ENCODE measurements at regions of chr16 and their contacts with region 1.

Region 1: GRCh38 chr16:4271176-4272066 is 1.4 kb downstream of the TFAP4 start:
- DNase-seq: peak; percentile 95
- H3K4me3 Mint-ChIP-seq: peak overlapping the region; percentile 86
- H3K27ac Mint-ChIP-seq: peak overlapping the region; percentile 94
- H3K4me1 Mint-ChIP-seq: peaks cover 12% of the 10 kb centered on the region
- H3K27me3 Mint-ChIP-seq: no peaks in the 10 kb centered on the region

Region 2: GRCh38 chr16:4307215-4308037 is 36.0 kb after region 1 on chr16:
- CTCF ChIA-PET with region 1: interaction called, 5 read pairs
- intact Hi-C with region 1: loop called (anchors 1 kb)
- DNase-seq: peak; percentile 95
- H3K4me3 Mint-ChIP-seq: peak overlapping the region; percentile 84
- H3K27ac Mint-ChIP-seq: peak overlapping the region; percentile 85
- H3K4me1 Mint-ChIP-seq: peaks cover 24% of the 10 kb centered on the region
- H3K27me3 Mint-ChIP-seq: no peaks in the 10 kb centered on the region

Region 3: GRCh38 chr16:4425378-4426020 is 154.1 kb after region 1 on chr16 and contains the start of gene DNAJA3:
- CTCF ChIA-PET with region 1: no interaction called
- intact Hi-C with region 1: loop called (anchors 1 kb)
- DNase-seq: peak; percentile 93
- H3K4me3 Mint-ChIP-seq: peak within 1 kb of the TSS; percentile 99
- H3K27ac Mint-ChIP-seq: peak within 1 kb of the TSS; percentile 100
- H3K4me1 Mint-ChIP-seq: peaks cover 39% of the 10 kb centered on the region
- H3K27me3 Mint-ChIP-seq: no peaks in the 10 kb centered on the region
- total RNA-seq, gene DNAJA3: 86.7 to 88.0 TPM